Prostate gland (tissue), 2 donors: ENCODE measurements at regions of chr5 and their contacts with region 1.

Region 1: DNA sequence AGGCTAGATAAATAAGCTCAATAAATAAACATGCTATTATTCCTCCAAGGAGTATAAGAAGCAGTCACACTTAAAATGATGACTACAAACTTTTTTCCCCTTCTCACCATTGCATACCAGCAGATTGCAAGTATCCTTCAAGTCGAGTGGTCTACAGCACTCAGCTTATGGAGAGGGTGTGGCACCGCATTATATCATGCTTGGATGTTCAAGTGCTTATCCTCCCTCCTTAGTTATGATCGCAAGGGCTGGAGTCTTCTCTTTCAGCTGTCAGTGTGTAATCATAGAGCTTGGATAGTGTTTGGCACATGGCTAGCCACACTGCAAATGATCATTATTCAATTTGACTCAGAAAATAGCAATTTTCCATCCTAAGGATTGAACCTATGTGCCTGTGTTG is 124.0 kb downstream of the CARTPT start:
- DNase-seq: no peak
- H3K4me3 ChIP-seq: no peak overlapping the region
- H3K27ac ChIP-seq: no peak overlapping the region
- H3K4me1 ChIP-seq: no peaks in the 10 kb centered on the region
- H3K27me3 ChIP-seq: no peaks in the 10 kb centered on the region
- CTCF ChIP-seq: no peak
- POLR2A ChIP-seq: no peak

Region 2: DNA sequence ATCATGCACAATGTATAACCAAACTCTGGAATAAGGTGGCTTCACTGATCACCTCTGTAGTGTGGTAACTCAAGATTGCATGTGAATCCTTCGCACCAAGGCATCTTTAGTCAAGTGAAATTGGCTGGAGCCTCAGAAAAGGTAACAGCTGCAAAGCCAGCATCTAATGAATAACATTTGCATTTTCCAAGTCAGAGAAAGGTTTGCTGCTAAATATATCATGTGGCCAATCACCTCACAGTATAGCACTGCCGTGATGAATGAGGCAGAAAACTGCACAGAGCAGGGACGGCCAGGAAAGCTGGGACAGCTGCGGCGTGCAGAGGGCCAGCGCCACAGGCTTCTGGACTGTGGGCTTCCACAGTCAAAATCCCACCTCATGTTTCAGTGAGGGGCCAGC is 458.4 kb after region 1 on chr5:
- intact Hi-C with region 1: loop called (anchors 5 kb)
- DNase-seq: no peak
- H3K4me3 ChIP-seq: no peak overlapping the region
- H3K27ac ChIP-seq: no peak overlapping the region
- H3K4me1 ChIP-seq: no peaks in the 10 kb centered on the region
- H3K27me3 ChIP-seq: no peaks in the 10 kb centered on the region
- CTCF ChIP-seq: no peak
- POLR2A ChIP-seq: no peak